Transverse colon (tissue), 4 donors: ENCODE measurements at regions of chr10 and their contacts with region 1.

Region 1: DNA sequence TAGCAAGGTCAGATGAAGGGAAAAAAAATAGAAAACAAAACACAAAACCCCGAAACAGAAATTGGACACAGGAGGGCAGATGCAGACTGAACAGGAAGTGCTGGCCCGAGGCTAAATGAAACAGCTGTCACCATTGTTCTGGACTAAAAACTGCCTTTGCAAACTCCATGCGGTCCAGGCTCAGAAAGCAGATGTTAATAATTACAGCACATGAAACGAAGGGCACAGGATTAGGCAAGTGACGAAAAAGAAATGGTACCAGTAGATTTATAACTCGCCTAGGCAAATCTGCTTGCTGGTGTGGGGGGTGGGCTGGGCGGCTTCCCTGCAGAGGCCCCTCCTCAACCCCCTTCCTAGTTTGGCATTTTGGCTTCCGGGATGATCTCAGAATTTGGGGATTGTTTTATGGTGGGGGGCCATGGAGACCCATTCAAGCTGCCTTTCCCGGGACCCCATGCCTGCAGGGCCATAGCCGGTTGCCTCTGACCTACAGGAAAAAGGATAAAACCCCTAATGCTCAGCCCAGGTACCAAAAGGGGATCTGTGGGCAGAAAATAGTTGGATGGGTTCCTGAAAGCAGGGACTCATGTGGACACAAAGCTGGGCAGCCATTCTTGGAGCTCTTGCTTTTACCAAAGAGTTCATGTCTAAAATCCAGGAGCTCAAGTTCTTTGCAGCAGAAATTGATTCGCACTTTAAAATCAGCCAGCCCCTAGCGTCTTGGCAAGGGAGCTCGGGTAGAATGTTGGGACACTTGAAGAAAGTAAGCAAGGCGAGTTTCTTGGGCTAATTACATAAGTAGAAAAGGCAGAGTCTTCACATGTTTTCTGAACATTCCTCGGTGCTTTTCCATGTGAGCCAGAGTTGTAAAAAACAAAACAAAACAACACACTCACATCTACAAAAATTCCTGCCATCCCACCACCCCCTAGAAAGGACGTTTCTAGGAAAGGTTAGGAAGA is 39.0 kb upstream of the EMX2 start:
- DNase-seq: no peak
- H3K4me3 ChIP-seq: no peak overlapping the region
- H3K27ac ChIP-seq: no peak overlapping the region
- H3K4me1 ChIP-seq: peaks cover 0 to 5% (median 0%) of the 10 kb centered on the region in 4 donors
- H3K27me3 ChIP-seq: peaks cover 6% of the 10 kb centered on the region
- CTCF ChIP-seq: no peak
- EP300 ChIP-seq: no peak
- POLR2A ChIP-seq: no peak

Region 2: GRCh38 chr10:118423800-118424479 is 920.4 kb after region 1 on chr10:
- in situ Hi-C with region 1: loop called in 3 of 4 experiments (anchors 25 kb)
- intact Hi-C with region 1: no loop called
- DNase-seq: peak; percentile 76
- H3K4me3 ChIP-seq: no peak overlapping the region
- H3K27ac ChIP-seq: no peak overlapping the region
- H3K4me1 ChIP-seq: no peaks in the 10 kb centered on the region
- H3K27me3 ChIP-seq: no peaks in the 10 kb centered on the region
- CTCF ChIP-seq: peak; percentile 63 to 77 (median 73)
- EP300 ChIP-seq: no peak
- POLR2A ChIP-seq: no peak

Region 3: GRCh38 chr10:118447478-118448270 is 944.1 kb after region 1 on chr10:
- in situ Hi-C with region 1: loop called in 2 of 4 experiments (anchors 25 kb)
- intact Hi-C with region 1: no loop called
- DNase-seq: peak; percentile 57
- H3K4me3 ChIP-seq: no peak overlapping the region
- H3K27ac ChIP-seq: no peak overlapping the region
- H3K4me1 ChIP-seq: no peaks in the 10 kb centered on the region
- H3K27me3 ChIP-seq: peaks cover 16% of the 10 kb centered on the region
- CTCF ChIP-seq: no peak
- EP300 ChIP-seq: no peak
- POLR2A ChIP-seq: no peak